Dorsolateral prefrontal cortex (tissue), 120 donors: ENCODE measurements at regions of chr6 and their contacts with region 1.

Region 1: GRCh38 chr6:163443985-163444533 is 29.5 kb downstream of the QKI start:
- DNase-seq: no peak
- H3K4me3 ChIP-seq: peak overlapping the region in 36 of 59 donors; percentile 1 to 90 (median 18)
- H3K27ac ChIP-seq: peak overlapping the region in 30 of 59 donors; percentile 4 to 65 (median 33)
- H3K27me3 ChIP-seq: no peaks in the 10 kb centered on the region
- CTCF ChIP-seq: peak in 5 of 56 donors; percentile 5 to 29 (median 26)

Region 2: DNA sequence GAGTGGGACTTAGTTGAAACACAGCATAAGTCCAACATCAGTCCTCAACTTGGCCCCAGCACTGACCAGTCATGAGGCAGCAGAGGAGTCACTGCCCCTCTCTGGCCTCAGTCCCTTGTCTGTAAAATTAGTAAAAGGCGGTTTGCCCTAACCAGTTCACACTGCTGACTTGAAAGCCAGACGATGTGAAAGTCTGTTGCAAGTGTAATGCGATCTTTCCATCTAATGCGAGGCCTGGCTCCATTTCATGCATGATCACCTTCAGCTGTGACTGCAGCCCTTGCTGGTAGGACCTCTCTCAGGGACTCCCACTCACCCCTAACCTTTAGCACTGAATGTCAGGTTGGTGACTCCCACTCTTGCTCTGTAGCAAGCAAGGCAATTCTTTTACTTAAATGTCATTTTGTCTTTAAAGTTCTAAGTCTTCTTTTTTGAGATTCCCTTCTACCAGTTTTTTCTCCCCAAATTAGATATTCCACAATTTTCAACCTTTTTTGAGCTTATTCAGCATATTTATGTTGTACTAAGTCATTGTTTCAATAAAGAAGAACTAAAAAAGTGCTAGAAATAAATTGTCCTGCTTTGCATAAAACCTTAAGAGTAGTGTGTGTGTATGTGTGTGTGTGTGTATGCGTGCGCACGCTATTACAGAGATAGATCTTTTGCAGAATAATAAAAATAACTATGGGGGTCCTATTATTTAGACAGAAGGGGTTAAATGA is 470.7 kb before region 1 on chr6:
- intact Hi-C with region 1: no loop called
- DNase-seq: no peak
- H3K4me3 ChIP-seq: peak overlapping the region in 23 of 59 donors; percentile 10 to 58 (median 31)
- H3K27ac ChIP-seq: peak overlapping the region in 6 of 59 donors; percentile 2 to 47 (median 8)
- H3K27me3 ChIP-seq: no peaks in the 10 kb centered on the region
- CTCF ChIP-seq: no peak

Region 3: GRCh38 chr6:163483107-163483506 is 39.0 kb after region 1 on chr6:
- intact Hi-C with region 1: loop called in 1 of 2 experiments (anchors 5 kb)
- DNase-seq: no peak
- H3K4me3 ChIP-seq: peak overlapping the region in 1 of 59 donors; percentile 8
- H3K27ac ChIP-seq: peak overlapping the region in 3 of 59 donors; percentile 6 to 10 (median 7)
- H3K27me3 ChIP-seq: no peaks in the 10 kb centered on the region
- CTCF ChIP-seq: no peak

Region 4: DNA sequence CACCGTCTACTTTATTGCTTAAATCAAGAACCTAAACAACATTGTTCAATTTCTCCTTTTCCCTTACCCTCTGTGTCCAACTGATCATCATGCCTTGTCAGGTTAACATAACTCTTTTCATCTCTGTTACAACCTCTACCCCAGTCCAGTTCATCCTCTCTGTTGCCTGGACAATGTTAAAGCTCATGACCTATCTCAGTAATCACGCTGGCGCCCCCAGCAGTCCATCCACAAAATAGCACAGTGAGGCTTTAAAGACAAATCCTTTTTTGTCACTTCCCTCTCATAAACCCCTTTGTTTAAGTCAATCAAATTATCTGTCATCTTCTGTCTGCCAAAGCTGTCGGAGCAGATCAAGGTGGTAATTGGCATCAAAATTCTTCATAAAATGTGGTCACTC is 110.6 kb after region 1 on chr6:
- intact Hi-C with region 1: loop called in 1 of 2 experiments (anchors 10 kb)
- DNase-seq: peak in 4 of 10 donors; percentile 41 to 65 (median 50)
- H3K4me3 ChIP-seq: peak overlapping the region in 1 of 59 donors; percentile 11
- H3K27ac ChIP-seq: peak overlapping the region in 42 of 59 donors; percentile 0 to 73 (median 47)
- H3K27me3 ChIP-seq: no peaks in the 10 kb centered on the region
- CTCF ChIP-seq: peak in 50 of 56 donors; percentile 21 to 66 (median 46)